Naive thymus-derived CD4-positive, alpha-beta T cell (primary cell): ENCODE measurements at regions of chr14 and their contacts with region 1.

Region 1: GRCh38 chr14:73058224-73058921 is at the start of gene RBM25:
- DNase-seq: peak; percentile 85 to 98 (median 96)
- ATAC-seq: peak; percentile 99
- H3K4me3 ChIP-seq: peak within 1 kb of the TSS; percentile 77
- H3K4me3 Mint-ChIP-seq: no peak within 1 kb of the TSS
- H3K27ac ChIP-seq: peak within 1 kb of the TSS; percentile 92
- H3K27ac Mint-ChIP-seq: no peak within 1 kb of the TSS
- H3K4me1 ChIP-seq: peaks cover 30 to 36% of the 10 kb centered on the region in 2 donors
- H3K4me1 Mint-ChIP-seq: peaks cover 19 to 45% (median 30%) of the 10 kb centered on the region in 7 donors
- H3K27me3 ChIP-seq: no peaks in the 10 kb centered on the region
- H3K27me3 Mint-ChIP-seq: no peaks in the 10 kb centered on the region
- total RNA-seq, gene RBM25: 111 to 168 (median 146) TPM

Region 2: DNA sequence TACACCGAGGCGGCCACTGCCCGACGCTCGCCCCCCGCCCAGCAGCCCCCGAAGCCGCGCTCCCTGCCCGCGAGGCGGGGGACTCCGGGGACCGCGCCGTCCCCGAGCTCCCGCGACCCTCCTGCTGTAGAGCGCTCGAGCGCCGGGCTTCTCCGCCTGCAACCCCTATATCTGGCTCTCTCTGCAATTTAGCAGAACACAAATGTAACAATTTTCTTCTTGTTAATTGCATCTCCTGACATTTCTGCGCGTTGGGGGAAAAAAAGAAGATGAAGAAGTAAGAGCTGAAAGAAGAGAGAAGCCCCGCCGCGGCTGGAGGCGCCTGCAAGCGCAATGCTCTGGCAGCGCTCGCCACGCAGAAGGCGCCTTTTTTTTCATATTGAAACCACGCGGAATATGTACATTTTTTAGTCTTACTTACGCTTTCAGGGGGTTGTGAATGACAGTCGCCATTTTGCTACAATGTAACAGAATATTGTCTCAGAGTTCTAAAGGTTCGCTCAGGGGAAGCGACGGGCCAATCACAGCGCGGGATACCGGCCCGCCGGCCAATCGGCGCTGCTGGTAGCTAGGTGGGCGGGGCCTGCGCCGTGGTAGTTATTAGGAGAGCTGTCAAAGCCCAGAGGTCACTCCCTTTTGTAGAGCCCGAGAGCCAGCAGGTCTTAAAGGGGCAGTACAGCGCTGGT is 164.6 kb before region 1 on chr14 and contains the start of gene DPF3:
- CTCF ChIA-PET with region 1: no interaction called
- POLR2A ChIA-PET with region 1: no interaction called
- intact Hi-C with region 1: loop called (anchors 1 kb)
- DNase-seq: peak; percentile 80 to 91 (median 86)
- ATAC-seq: peak; percentile 99
- H3K4me3 ChIP-seq: peak within 1 kb of the TSS; percentile 74
- H3K4me3 Mint-ChIP-seq: peak within 1 kb of the TSS; percentile 91 to 99 (median 97)
- H3K27ac ChIP-seq: peak within 1 kb of the TSS; percentile 51
- H3K27ac Mint-ChIP-seq: peak within 1 kb of the TSS; percentile 22 to 94 (median 56)
- H3K4me1 ChIP-seq: peaks cover 9 to 20% of the 10 kb centered on the region in 2 donors
- H3K4me1 Mint-ChIP-seq: peaks cover 20 to 36% (median 24%) of the 10 kb centered on the region in 7 donors
- H3K27me3 ChIP-seq: peaks cover 6 to 10% of the 10 kb centered on the region in 2 donors
- H3K27me3 Mint-ChIP-seq: peaks cover 37 to 72% (median 53%) of the 10 kb centered on the region in 5 donors
- total RNA-seq, gene DPF3: 0.24 to 5.5 (median 0.61) TPM in 4 of 5 experiments, not detected in the other

Region 3: GRCh38 chr14:73136387-73137225 is 78.2 kb after region 1 on chr14 and contains the start of gene PSEN1:
- CTCF ChIA-PET with region 1: no interaction called
- POLR2A ChIA-PET with region 1: interaction called, 32 read pairs
- intact Hi-C with region 1: loop called (anchors 1 kb)
- DNase-seq: peak; percentile 97 to 100 (median 98)
- ATAC-seq: peak; percentile 96
- H3K4me3 ChIP-seq: peak within 1 kb of the TSS; percentile 93
- H3K4me3 Mint-ChIP-seq: peak within 1 kb of the TSS; percentile 82 to 99 (median 91)
- H3K27ac ChIP-seq: peak within 1 kb of the TSS; percentile 98
- H3K27ac Mint-ChIP-seq: peak within 1 kb of the TSS; percentile 71 to 99 (median 96)
- H3K4me1 ChIP-seq: peaks cover 7 to 17% of the 10 kb centered on the region in 2 donors
- H3K4me1 Mint-ChIP-seq: peaks cover 17 to 39% (median 36%) of the 10 kb centered on the region in 7 donors
- H3K27me3 ChIP-seq: no peaks in the 10 kb centered on the region
- H3K27me3 Mint-ChIP-seq: no peaks in the 10 kb centered on the region
- total RNA-seq, gene PSEN1: 32.7 to 55.8 (median 49.3) TPM

Region 4: DNA sequence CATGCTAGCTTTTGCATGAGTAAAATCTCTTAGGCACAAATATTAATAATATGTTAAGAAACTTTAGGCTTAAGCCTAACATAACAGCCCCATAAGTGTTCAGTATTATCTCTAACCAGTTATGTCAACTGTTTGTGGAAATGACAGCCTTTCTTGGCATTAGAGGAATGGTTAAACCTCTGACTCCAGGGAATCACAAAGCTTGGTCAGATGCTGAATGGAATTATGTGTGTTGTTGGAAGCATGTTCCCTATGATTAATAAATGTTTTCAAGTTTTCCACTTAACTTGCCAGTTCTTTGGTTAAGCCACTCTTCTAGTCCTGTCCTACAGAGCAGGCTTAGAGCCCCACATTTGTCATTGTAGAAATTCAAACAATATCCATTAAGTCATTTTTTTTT is 94.9 kb after region 1 on chr14:
- CTCF ChIA-PET with region 1: no interaction called
- POLR2A ChIA-PET with region 1: no interaction called
- intact Hi-C with region 1: no loop called
- DNase-seq: no peak
- ATAC-seq: no peak
- H3K4me3 ChIP-seq: no peak overlapping the region
- H3K4me3 Mint-ChIP-seq: no peak overlapping the region
- H3K27ac ChIP-seq: no peak overlapping the region
- H3K27ac Mint-ChIP-seq: no peak overlapping the region
- H3K4me1 ChIP-seq: no peaks in the 10 kb centered on the region
- H3K4me1 Mint-ChIP-seq: no peaks in the 10 kb centered on the region
- H3K27me3 ChIP-seq: no peaks in the 10 kb centered on the region
- H3K27me3 Mint-ChIP-seq: no peaks in the 10 kb centered on the region

Region 5: GRCh38 chr14:73644531-73645247 is 586.3 kb after region 1 on chr14 and contains the start of gene DNAL1:
- CTCF ChIA-PET with region 1: no interaction called
- POLR2A ChIA-PET with region 1: no interaction called
- intact Hi-C with region 1: loop called in 1 of 2 experiments (anchors 10 kb)
- DNase-seq: peak; percentile 80 to 93 (median 86)
- ATAC-seq: peak; percentile 99
- H3K4me3 ChIP-seq: peak within 1 kb of the TSS; percentile 92
- H3K4me3 Mint-ChIP-seq: peak within 1 kb of the TSS; percentile 89 to 99 (median 94)
- H3K27ac ChIP-seq: peak within 1 kb of the TSS; percentile 80
- H3K27ac Mint-ChIP-seq: peak within 1 kb of the TSS; percentile 86 to 98 (median 93)
- H3K4me1 ChIP-seq: peaks cover 7 to 9% of the 10 kb centered on the region in 2 donors
- H3K4me1 Mint-ChIP-seq: peaks cover 8 to 20% (median 16%) of the 10 kb centered on the region in 7 donors
- H3K27me3 ChIP-seq: no peaks in the 10 kb centered on the region
- H3K27me3 Mint-ChIP-seq: no peaks in the 10 kb centered on the region
- total RNA-seq, gene DNAL1: 3.6 to 8.4 (median 6.5) TPM

Region 6: DNA sequence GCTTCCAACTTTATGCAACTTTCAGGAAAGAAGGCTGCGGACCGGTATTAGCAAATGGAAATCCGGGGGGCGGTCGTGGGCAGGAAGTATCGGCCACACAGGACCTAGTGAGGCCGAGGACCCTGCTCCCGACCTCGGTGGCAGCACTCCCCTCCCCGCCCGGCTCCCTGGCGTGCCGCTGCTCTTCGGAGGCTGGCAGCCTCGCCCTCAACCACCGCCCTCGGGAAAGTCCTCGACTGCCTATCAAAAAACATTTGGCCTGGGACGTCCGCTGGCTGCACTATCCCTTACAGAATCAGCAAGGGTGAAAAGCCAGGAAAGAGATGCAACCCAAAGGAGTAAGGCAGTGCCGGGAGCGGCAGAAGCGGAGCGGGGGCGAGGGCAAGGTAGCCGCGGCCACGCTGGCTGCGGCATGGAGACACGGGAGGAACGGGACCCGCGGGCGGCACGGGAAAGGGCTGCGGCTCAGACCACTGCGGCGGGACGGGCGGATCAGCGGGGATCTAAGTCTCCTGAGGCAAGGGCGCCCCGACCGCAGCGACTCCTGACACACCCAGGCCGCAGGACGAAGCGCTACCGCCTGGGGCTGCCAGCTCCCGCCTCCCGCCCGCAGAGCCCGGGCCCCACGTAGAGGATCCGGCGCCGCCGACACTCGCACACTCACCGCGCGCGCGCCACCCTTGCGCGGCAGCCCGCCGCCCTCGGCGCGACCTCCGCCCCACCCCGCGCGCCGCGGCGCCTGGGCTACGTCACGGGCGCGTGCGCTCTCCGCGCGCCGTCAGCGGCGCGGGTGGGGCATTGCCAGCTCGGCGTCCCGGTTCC is 960.4 kb after region 1 on chr14 and contains the starts of genes BBOF1 and ENTPD5:
- CTCF ChIA-PET with region 1: no interaction called
- POLR2A ChIA-PET with region 1: no interaction called
- intact Hi-C with region 1: loop called in 1 of 2 experiments (anchors 2 kb)
- DNase-seq: peak; percentile 83 to 89 (median 88)
- ATAC-seq: peak; percentile 98
- H3K4me3 ChIP-seq: peak within 1 kb of the TSS; percentile 79
- H3K4me3 Mint-ChIP-seq: peak within 1 kb of the TSS; percentile 80 to 97 (median 94)
- H3K27ac ChIP-seq: peak within 1 kb of the TSS; percentile 93
- H3K27ac Mint-ChIP-seq: peak within 1 kb of the TSS; percentile 89 to 98 (median 96)
- H3K4me1 ChIP-seq: peaks cover 6 to 10% of the 10 kb centered on the region in 2 donors
- H3K4me1 Mint-ChIP-seq: peaks cover 7 to 24% (median 14%) of the 10 kb centered on the region in 7 donors
- H3K27me3 ChIP-seq: no peaks in the 10 kb centered on the region
- H3K27me3 Mint-ChIP-seq: peaks cover 0 to 2% (median 0%) of the 10 kb centered on the region in 5 donors
- total RNA-seq, gene BBOF1: 0.80 to 4.0 (median 2.6) TPM
- total RNA-seq, gene ENTPD5: 8.6 to 17.1 (median 11.2) TPM

Region 7: GRCh38 chr14:74762917-74763802 is 1704.8 kb after region 1 on chr14 and contains the start of gene YLPM1:
- CTCF ChIA-PET with region 1: no interaction called
- POLR2A ChIA-PET with region 1: no interaction called
- intact Hi-C with region 1: loop called in 1 of 2 experiments (anchors 2 kb)
- DNase-seq: peak; percentile 79 to 97 (median 95)
- ATAC-seq: peak; percentile 98
- H3K4me3 ChIP-seq: peak within 1 kb of the TSS; percentile 58
- H3K4me3 Mint-ChIP-seq: peak within 1 kb of the TSS; percentile 86 to 99 (median 95)
- H3K27ac ChIP-seq: peak within 1 kb of the TSS; percentile 93
- H3K27ac Mint-ChIP-seq: peak within 1 kb of the TSS; percentile 87 to 97 (median 95)
- H3K4me1 ChIP-seq: peaks cover 31 to 38% of the 10 kb centered on the region in 2 donors
- H3K4me1 Mint-ChIP-seq: peaks cover 43 to 56% (median 49%) of the 10 kb centered on the region in 7 donors
- H3K27me3 ChIP-seq: no peaks in the 10 kb centered on the region
- H3K27me3 Mint-ChIP-seq: peaks cover 0 to 2% (median 0%) of the 10 kb centered on the region in 5 donors
- total RNA-seq, gene YLPM1: 84.7 to 119 (median 109) TPM